ENCODE measurements at regions of chr1 and their contacts with region 1.

Region 1: DNA sequence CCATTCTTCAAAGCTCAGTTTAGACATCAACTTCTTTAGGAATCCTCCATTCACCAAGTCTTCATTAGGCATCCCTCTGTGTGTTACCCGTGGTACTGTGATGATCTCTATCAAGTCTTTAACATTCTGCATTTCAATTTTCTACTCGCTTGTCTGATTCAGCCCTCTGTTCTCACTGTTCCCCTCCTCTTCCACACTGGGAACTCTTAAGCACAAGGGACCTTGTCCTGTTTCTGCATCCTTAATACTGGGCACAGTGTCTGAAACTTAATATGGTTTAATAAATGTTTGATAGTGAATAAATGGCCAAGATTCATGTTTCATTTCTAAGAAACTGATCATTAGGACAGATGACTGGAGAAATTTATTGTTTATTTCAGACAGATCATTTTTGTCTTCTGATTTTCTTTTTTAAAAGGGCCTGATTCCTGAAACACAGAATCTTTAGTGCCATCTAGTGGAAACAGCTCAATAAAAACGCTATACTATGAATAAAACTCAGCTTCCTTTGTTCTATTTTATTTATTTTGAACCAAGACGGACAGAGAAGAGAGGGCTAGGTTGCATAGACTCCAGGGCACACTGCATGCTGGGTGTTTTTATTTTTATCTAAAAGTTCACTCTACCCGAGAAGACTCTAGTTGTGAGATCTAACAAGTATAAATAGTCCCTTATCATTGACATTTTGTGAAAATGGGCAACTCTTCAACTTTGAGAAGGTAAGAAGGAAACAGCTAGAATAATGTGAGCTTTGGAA is 7.0 kb upstream of the TRIM45 start:
- DNase-seq: no peak
- H3K4me3 ChIP-seq: no peak overlapping the region
- H3K27ac ChIP-seq: no peak overlapping the region
- H3K4me1 ChIP-seq: peaks cover 0 to 3% (median 0%) of the 10 kb centered on the region in 4 donors
- H3K27me3 ChIP-seq: peaks cover 6% of the 10 kb centered on the region
- CTCF ChIP-seq: peak; percentile 27 to 44 (median 34)
- EP300 ChIP-seq: no peak
- POLR2A ChIP-seq: no peak

Region 2: GRCh38 chr1:117067533-117068370 is 60.7 kb before region 1 on chr1:
- in situ Hi-C with region 1: loop called in 3 of 4 experiments (anchors 5 to 10 kb)
- intact Hi-C with region 1: loop called (anchors 5 kb)
- DNase-seq: peak; percentile 51
- H3K4me3 ChIP-seq: no peak overlapping the region
- H3K27ac ChIP-seq: no peak overlapping the region
- H3K4me1 ChIP-seq: peaks cover 0 to 4% (median 0%) of the 10 kb centered on the region in 4 donors
- H3K27me3 ChIP-seq: no peaks in the 10 kb centered on the region
- CTCF ChIP-seq: peak; percentile 71 to 82 (median 75)
- EP300 ChIP-seq: no peak
- POLR2A ChIP-seq: no peak

Region 3: DNA sequence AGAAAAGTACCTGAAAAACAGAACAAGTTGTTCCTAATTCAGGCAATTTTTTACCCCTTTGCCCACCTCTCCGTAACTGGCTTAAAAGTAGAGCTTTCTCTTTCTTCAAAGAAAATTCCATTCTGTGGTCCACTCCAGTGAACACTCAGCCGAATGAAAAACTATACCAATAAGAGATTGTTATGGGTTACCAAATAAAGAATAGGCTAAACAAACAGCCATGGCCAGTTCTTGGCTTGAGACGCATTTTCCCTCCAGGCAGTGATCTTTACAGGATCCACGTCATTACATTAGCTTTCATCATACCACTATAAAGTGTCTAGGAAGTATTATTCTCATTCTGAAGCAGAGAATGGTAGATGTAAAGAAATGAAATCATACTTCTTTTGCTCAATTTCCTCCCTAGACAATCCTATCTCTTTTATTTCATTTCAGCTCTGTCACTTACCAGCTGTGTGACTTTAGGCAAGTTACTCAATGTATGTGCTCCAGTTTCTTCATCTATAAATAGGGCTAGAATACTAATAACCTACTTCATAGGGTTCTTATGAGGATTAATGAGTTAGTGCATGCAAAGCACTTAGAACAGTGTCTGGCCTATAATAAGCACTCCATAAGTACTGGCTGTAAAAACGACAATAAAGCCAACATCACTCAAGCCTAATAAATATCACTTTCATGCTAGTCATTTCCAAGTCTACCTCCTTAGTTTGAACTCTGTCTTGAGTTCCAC is 19.5 kb after region 1 on chr1:
- in situ Hi-C with region 1: no loop called
- intact Hi-C with region 1: loop called (anchors 1 kb)
- DNase-seq: no peak
- H3K4me3 ChIP-seq: no peak overlapping the region
- H3K27ac ChIP-seq: no peak overlapping the region
- H3K4me1 ChIP-seq: no peaks in the 10 kb centered on the region
- H3K27me3 ChIP-seq: no peaks in the 10 kb centered on the region
- CTCF ChIP-seq: no peak
- EP300 ChIP-seq: no peak
- POLR2A ChIP-seq: no peak

Region 4: DNA sequence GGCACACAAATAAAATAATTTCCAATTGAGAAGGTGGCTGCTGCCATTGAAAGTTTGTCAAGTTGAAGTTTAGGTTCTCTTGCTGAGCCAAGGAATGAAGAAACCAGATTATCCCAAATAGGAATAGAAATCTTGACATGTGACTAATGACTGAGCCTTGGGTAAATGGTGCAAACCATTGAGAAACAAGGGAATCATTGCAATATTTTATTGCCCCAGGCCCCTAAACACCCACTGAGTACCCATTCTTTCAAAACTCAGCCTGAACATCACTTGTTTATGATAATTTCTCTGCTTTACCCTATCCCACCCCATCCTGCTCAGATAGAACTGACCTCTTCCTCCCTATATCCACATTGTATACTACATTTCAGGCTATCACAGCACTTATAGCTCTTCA is 128.8 kb after region 1 on chr1:
- in situ Hi-C with region 1: no loop called
- intact Hi-C with region 1: no loop called
- DNase-seq: no peak
- H3K4me3 ChIP-seq: no peak overlapping the region
- H3K27ac ChIP-seq: no peak overlapping the region
- H3K4me1 ChIP-seq: no peaks in the 10 kb centered on the region
- H3K27me3 ChIP-seq: no peaks in the 10 kb centered on the region
- CTCF ChIP-seq: no peak
- EP300 ChIP-seq: no peak
- POLR2A ChIP-seq: no peak

Measured in transverse colon (tissue), 4 donors.